Activated CD4-positive, alpha-beta memory T cell treated with anti-CD3 and anti-CD28 coated beads, Interleukin-2, amount 10 ng/mL, durations not matched to agents 7 days and 5 days (primary cell): ENCODE measurements at regions of chr1 and their contacts with region 1.

Region 1: DNA sequence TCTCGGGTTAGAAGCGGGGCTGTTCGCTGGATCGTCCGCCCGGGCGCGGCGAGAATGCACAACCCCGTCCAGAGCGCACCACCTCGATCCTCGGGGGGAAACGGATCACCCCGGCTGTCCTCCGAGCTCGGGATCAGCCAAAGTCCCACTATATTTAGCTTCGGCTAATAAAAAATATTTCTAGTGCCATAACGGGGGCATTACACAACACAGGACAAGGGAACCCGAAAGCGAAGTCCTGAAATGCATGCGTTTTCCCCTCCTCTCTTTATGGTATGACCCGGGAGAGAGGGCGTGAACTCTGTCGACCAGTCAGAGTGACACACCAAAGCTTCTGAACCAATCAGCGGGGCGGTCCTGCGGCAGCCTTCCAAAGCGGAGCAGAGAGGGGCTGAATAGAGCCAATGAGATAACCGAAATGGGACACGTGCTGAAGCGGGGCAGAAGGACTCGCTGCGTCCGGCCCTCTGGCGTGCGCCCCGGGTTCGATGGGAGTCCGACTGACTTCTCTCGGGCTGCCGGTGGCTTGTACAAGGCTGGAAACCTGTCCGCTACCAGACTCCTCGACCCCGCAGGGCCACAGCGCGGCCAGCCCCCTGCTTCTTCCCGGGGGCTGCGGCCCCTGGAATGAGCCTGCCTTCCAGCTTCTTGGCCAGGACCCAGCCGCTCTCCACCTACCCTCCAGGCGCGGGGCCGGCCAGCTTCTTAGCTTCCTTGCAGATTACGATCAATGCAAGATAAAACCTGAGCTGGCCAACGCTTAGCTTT is at the start of gene ALDH4A1:
- DNase-seq: peak; percentile 96
- H3K4me3 Mint-ChIP-seq: peak within 1 kb of the TSS; percentile 80
- H3K27ac Mint-ChIP-seq: peak within 1 kb of the TSS; percentile 86
- H3K4me1 Mint-ChIP-seq: peaks cover 33% of the 10 kb centered on the region
- H3K27me3 Mint-ChIP-seq: no peaks in the 10 kb centered on the region
- total RNA-seq, gene ALDH4A1: 3.3 to 3.7 TPM

Region 2: GRCh38 chr1:18883636-18884418 is 18.9 kb before region 1 on chr1:
- CTCF ChIA-PET with region 1: interaction called, 14 read pairs
- POLR2A ChIA-PET with region 1: interaction called, 3 read pairs
- DNase-seq: peak; percentile 72
- H3K4me3 Mint-ChIP-seq: no peak overlapping the region
- H3K27ac Mint-ChIP-seq: no peak overlapping the region
- H3K4me1 Mint-ChIP-seq: no peaks in the 10 kb centered on the region
- H3K27me3 Mint-ChIP-seq: no peaks in the 10 kb centered on the region

Region 3: DNA sequence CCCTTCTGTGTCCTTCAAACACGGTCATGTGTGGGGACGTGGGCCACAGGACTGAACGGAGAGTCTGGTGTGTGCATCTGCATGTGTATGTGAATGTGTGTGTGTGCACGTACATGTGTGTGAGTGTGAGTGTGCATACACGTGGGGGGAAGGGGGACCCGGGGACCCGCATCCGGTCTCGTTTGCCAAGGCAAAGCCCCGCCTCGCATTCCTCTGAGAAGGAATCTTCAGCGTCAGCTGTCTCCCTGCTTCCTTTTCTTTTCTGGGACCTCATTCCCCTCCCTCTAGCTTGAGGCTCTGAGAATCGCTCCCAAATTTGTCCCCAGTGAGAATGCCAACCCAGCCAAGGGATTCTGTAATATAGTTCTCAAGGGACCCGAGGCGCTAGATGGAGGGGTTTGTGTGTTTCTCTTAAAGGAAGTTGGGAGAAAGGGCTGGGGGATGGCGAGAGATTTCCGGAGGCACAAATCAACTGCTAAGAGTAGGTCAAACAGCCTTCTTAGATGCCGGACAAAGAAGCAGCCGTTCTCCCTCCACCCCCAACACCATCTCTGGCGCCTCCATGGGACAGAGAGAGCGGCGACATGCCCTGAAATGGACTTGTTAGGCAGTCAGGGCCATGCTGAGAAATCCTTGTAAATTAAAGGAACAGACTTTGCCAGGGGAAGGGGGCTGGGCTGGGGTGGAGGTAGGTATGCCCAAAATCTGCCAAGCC is 47.1 kb after region 1 on chr1:
- CTCF ChIA-PET with region 1: interaction called, 123 read pairs
- POLR2A ChIA-PET with region 1: interaction called, 19 read pairs
- DNase-seq: peak; percentile 37
- H3K4me3 Mint-ChIP-seq: peak overlapping the region; percentile 82
- H3K27ac Mint-ChIP-seq: peak overlapping the region; percentile 95
- H3K4me1 Mint-ChIP-seq: peaks cover 94% of the 10 kb centered on the region
- H3K27me3 Mint-ChIP-seq: peaks cover 4% of the 10 kb centered on the region

Region 4: DNA sequence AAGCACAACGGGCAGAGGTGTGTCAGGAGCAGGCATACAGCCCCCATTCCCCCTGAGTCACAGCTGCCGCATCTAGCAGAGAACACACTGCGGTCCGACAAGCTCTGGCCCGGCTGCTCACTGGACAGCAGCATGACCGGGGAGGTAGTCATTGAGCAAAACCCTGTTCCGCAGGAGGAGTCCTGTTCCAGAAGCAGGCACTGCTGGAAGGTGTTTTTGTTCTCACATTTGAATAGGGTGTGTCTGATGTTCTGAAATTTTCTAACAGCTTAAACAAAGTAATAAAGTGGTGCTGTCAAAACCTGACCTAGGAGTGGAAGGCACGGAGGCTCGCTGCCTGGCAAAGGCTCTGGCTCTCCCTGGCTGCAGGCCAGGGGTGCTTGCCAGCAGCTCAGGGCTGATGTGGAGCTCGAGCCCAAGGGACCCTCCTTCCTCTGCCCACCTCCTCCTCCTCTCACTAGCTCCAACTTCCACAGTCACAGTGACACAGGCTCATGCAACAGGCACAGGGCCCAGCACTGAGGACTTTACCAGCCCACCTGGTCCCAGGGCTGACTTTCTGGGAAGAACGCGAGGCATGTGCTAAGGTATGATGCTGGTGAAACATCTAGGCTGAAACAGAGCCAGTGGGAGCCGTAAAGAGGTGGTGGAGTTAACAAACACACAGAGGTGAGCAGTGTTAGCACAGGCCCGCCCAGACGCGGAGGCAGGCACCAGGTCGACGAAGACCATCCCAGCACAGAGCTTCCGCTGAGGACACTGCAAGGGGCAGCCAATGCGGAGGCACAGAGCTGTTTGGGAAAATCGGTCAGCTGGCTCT is 172.4 kb after region 1 on chr1:
- CTCF ChIA-PET with region 1: interaction called, 36 read pairs
- POLR2A ChIA-PET with region 1: interaction called, 14 read pairs
- DNase-seq: no peak
- H3K4me3 Mint-ChIP-seq: no peak overlapping the region
- H3K27ac Mint-ChIP-seq: peak overlapping the region; percentile 71
- H3K4me1 Mint-ChIP-seq: peaks cover 34% of the 10 kb centered on the region
- H3K27me3 Mint-ChIP-seq: no peaks in the 10 kb centered on the region

Region 5: GRCh38 chr1:19113697-19114092 is 211.0 kb after region 1 on chr1:
- CTCF ChIA-PET with region 1: interaction called, 29 read pairs
- POLR2A ChIA-PET with region 1: no interaction called
- DNase-seq: peak; percentile 54
- H3K4me3 Mint-ChIP-seq: no peak overlapping the region
- H3K27ac Mint-ChIP-seq: no peak overlapping the region
- H3K4me1 Mint-ChIP-seq: no peaks in the 10 kb centered on the region
- H3K27me3 Mint-ChIP-seq: no peaks in the 10 kb centered on the region

Region 6: DNA sequence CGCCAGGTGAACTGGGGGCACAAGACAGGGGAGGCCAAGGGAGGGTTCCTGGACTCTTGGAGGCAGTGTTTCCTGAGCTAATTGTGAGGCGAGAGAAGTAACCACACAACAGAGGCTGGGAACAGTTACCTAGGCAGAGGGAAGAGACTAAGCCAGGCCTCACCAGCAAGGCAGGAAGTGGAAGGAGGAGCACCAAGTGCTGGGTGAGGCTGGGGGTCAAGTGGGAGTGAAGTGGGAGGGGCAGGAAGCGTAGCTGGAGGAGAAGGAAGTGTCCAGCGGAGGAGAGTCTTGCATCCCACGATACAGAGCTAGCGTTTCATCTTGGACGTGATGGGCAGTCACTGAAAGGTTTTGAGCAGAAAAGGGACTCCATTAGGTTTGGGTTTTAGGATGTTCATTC is 630.9 kb after region 1 on chr1:
- CTCF ChIA-PET with region 1: no interaction called
- POLR2A ChIA-PET with region 1: no interaction called
- DNase-seq: no peak
- H3K4me3 Mint-ChIP-seq: no peak overlapping the region
- H3K27ac Mint-ChIP-seq: no peak overlapping the region
- H3K4me1 Mint-ChIP-seq: no peaks in the 10 kb centered on the region
- H3K27me3 Mint-ChIP-seq: no peaks in the 10 kb centered on the region